ENCODE measurements at regions of chr9 and their contacts with region 1.

Region 1: GRCh38 chr9:19551124-19551929 is 142.5 kb downstream of the ACER2 start:
- DNase-seq: peak; percentile 7
- ATAC-seq: peak; percentile 73
- H3K4me3 ChIP-seq: peak overlapping the region; percentile 33; the same call in 1 of the 2 replicates
- H3K27ac ChIP-seq: no peak overlapping the region
- H3K4me1 ChIP-seq: 0 out of 2 replicates have a peak, but pooled peaks cover 9% of the 10 kb centered on the region
- H3K27me3 ChIP-seq: no peaks in the 10 kb centered on the region
- CTCF ChIP-seq: no peak
- EP300 ChIP-seq: no peak
- POLR2A ChIP-seq: no peak
- RAD21 ChIP-seq: no peak

Region 2: GRCh38 chr9:19481971-19482404 is 69.3 kb before region 1 on chr9:
- CTCF ChIA-PET with region 1: no interaction called
- POLR2A ChIA-PET with region 1: no interaction called
- RAD21 ChIA-PET with region 1: no interaction called
- SMC1A ChIA-PET with region 1: no interaction called
- in situ Hi-C with region 1: loop called (anchors 10 kb)
- intact Hi-C with region 1: no loop called
- DNase-seq: no peak
- ATAC-seq: no peak
- H3K4me3 ChIP-seq: no peak overlapping the region
- H3K27ac ChIP-seq: no peak overlapping the region
- H3K4me1 ChIP-seq: no peaks in the 10 kb centered on the region
- H3K27me3 ChIP-seq: no peaks in the 10 kb centered on the region; a peak in 1 of 4 replicates
- CTCF ChIP-seq: no peak
- EP300 ChIP-seq: no peak
- POLR2A ChIP-seq: no peak
- RAD21 ChIP-seq: no peak

Region 3: GRCh38 chr9:19527663-19528062 is 23.7 kb before region 1 on chr9:
- CTCF ChIA-PET with region 1: no interaction called
- POLR2A ChIA-PET with region 1: no interaction called
- RAD21 ChIA-PET with region 1: no interaction called
- SMC1A ChIA-PET with region 1: no interaction called
- in situ Hi-C with region 1: no loop called
- intact Hi-C with region 1: loop called (anchors 2 kb)
- DNase-seq: no peak
- ATAC-seq: no peak
- H3K4me3 ChIP-seq: no peak overlapping the region
- H3K27ac ChIP-seq: no peak overlapping the region
- H3K4me1 ChIP-seq: no peaks in the 10 kb centered on the region
- H3K27me3 ChIP-seq: no peaks in the 10 kb centered on the region; a peak in 1 of 4 replicates
- CTCF ChIP-seq: no peak
- EP300 ChIP-seq: no peak
- POLR2A ChIP-seq: no peak
- RAD21 ChIP-seq: no peak